ENCODE measurements at regions of chr5 and their contacts with region 1.

Region 1: GRCh38 chr5:149834246-149834855 is 104.2 kb downstream of the PPARGC1B start:
- DNase-seq: peak; percentile 43 to 57 (median 49)
- H3K4me3 ChIP-seq: no peak overlapping the region
- H3K4me3 Mint-ChIP-seq: peak overlapping the region in 1 of 8 donors; percentile 28
- H3K27ac ChIP-seq: no peak overlapping the region
- H3K27ac Mint-ChIP-seq: no peak overlapping the region
- H3K4me1 ChIP-seq: no peaks in the 10 kb centered on the region
- H3K4me1 Mint-ChIP-seq: no peaks in the 10 kb centered on the region
- H3K27me3 ChIP-seq: no peaks in the 10 kb centered on the region
- H3K27me3 Mint-ChIP-seq: no peaks in the 10 kb centered on the region

Region 2: DNA sequence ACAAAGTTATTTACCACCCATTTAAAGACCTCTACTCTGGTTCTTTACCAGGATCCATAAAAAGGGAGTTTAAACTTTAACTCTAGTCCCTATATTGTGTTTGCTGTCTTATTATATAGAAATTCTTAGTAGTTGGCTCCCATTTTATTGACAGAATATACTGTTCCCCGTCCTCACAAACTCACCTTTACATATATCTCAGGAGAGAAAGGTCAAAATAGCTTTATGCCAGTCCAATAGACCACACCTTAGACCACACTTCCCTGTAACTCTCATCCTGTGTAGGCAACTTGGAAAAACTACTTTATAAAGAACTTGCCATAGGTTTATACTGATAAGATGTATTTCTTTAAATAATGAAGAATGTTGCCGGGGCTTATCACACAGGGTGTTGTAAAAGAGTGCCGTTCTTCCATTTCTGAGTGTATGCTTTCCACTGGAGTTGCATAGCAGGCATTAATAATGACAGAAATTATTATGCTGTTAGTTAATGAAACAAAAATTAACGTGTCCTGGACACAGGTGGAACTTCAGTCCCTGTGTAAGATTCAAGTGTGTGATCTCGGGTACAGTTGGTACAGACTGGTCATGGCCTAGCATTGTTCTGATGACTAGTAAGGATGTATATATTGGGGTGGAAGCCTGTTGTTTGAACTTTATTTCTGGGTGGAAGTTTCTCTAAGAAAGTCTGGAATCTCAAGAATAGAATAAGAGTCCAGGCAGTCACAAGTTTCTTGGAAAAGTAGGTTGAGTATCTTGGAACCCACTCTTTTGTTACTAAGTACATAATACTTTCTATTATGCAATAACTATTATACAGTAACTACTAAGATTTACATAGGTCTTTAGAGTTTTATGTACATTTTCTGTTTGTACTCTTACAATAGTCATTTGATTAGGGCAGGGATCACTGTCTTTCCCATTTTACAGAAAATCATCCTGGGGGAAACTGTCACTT is 1699.0 kb before region 1 on chr5:
- CTCF ChIA-PET with region 1: no interaction called
- POLR2A ChIA-PET with region 1: no interaction called
- intact Hi-C with region 1: no loop called
- DNase-seq: no peak
- H3K4me3 ChIP-seq: no peak overlapping the region
- H3K4me3 Mint-ChIP-seq: no peak overlapping the region
- H3K27ac ChIP-seq: no peak overlapping the region
- H3K27ac Mint-ChIP-seq: no peak overlapping the region
- H3K4me1 ChIP-seq: no peaks in the 10 kb centered on the region
- H3K4me1 Mint-ChIP-seq: no peaks in the 10 kb centered on the region
- H3K27me3 ChIP-seq: no peaks in the 10 kb centered on the region
- H3K27me3 Mint-ChIP-seq: peaks cover 0 to 4% of the 10 kb centered on the region in 2 donors

Region 3: DNA sequence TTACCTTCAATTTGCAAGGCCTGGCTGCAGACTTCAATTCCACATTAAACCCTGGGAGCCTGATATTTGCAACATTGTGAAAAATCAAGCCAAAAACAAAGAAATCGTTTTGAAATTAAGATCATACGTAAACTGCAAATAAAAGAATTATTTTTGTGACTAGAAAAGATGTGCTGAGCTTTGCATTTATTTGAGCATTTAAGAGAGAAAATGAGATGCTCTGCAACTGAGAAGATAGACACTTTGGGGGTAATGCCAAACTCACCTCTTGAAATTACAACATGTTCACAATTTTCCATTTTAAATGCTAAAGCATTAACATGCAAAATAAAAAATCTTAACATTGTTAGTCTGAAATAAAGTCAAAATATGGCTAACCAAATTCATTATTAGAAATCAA is 329.7 kb before region 1 on chr5:
- CTCF ChIA-PET with region 1: no interaction called
- POLR2A ChIA-PET with region 1: no interaction called
- intact Hi-C with region 1: no loop called
- DNase-seq: no peak
- H3K4me3 ChIP-seq: no peak overlapping the region
- H3K4me3 Mint-ChIP-seq: no peak overlapping the region
- H3K27ac ChIP-seq: peak overlapping the region; percentile 15
- H3K27ac Mint-ChIP-seq: no peak overlapping the region
- H3K4me1 ChIP-seq: no peaks in the 10 kb centered on the region
- H3K4me1 Mint-ChIP-seq: peaks cover 0 to 4% (median under 1%) of the 10 kb centered on the region in 4 donors
- H3K27me3 ChIP-seq: no peaks in the 10 kb centered on the region
- H3K27me3 Mint-ChIP-seq: no peaks in the 10 kb centered on the region

Region 4: GRCh38 chr5:149636851-149637246 is 197.5 kb before region 1 on chr5:
- CTCF ChIA-PET with region 1: interaction called, 309 read pairs
- POLR2A ChIA-PET with region 1: no interaction called
- intact Hi-C with region 1: no loop called
- DNase-seq: peak; percentile 39 to 65 (median 52)
- H3K4me3 ChIP-seq: no peak overlapping the region
- H3K4me3 Mint-ChIP-seq: no peak overlapping the region
- H3K27ac ChIP-seq: no peak overlapping the region
- H3K27ac Mint-ChIP-seq: no peak overlapping the region
- H3K4me1 ChIP-seq: no peaks in the 10 kb centered on the region
- H3K4me1 Mint-ChIP-seq: peaks cover 0 to 4% (median 1%) of the 10 kb centered on the region in 4 donors
- H3K27me3 ChIP-seq: peaks cover 5% of the 10 kb centered on the region
- H3K27me3 Mint-ChIP-seq: peaks cover 0 to under 1% of the 10 kb centered on the region in 2 donors

Region 5: GRCh38 chr5:149820536-149821510 is 13.5 kb before region 1 on chr5:
- CTCF ChIA-PET with region 1: interaction called, 51 read pairs
- POLR2A ChIA-PET with region 1: no interaction called
- intact Hi-C with region 1: no loop called
- DNase-seq: no peak
- H3K4me3 ChIP-seq: no peak overlapping the region
- H3K4me3 Mint-ChIP-seq: no peak overlapping the region
- H3K27ac ChIP-seq: no peak overlapping the region
- H3K27ac Mint-ChIP-seq: no peak overlapping the region
- H3K4me1 ChIP-seq: no peaks in the 10 kb centered on the region
- H3K4me1 Mint-ChIP-seq: no peaks in the 10 kb centered on the region
- H3K27me3 ChIP-seq: no peaks in the 10 kb centered on the region
- H3K27me3 Mint-ChIP-seq: no peaks in the 10 kb centered on the region

Region 6: DNA sequence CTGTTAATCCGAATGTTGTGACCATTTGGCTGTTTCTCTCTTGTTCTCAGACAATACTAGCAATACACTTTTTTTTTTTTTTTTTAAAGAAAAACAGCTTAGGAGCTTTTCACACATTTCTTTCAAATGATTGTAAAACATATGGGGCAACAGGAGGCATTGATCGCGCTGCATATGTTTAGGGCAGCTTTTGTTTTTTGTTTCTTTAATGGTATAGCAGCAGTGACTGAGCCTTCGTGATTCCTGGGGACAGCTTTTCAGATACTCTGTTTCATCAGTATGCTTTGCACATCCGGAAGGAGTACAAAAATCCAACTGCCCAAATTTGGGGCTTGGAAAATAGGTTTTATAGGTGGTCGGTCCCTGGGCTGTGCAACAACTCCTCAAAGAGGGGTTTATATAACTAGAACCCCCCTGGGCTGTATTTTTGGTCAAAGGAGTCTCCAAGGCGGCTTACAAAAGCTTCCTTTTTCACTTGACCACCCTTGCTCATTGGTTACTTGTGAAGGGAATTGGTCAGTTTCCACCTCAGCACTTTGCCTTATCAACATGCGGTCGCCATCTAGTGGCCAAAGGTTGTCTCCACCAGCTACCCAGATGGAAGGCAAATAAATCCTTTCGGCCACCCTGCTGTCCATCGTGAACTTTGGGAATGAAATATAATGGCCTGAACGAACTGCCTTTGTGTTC is 18.4 kb after region 1 on chr5:
- CTCF ChIA-PET with region 1: interaction called, 38 read pairs
- POLR2A ChIA-PET with region 1: no interaction called
- intact Hi-C with region 1: loop called (anchors 2 kb)
- DNase-seq: peak in 3 of 5 donors; percentile 10 to 19 (median 12)
- H3K4me3 ChIP-seq: no peak overlapping the region
- H3K4me3 Mint-ChIP-seq: no peak overlapping the region
- H3K27ac ChIP-seq: no peak overlapping the region
- H3K27ac Mint-ChIP-seq: no peak overlapping the region
- H3K4me1 ChIP-seq: no peaks in the 10 kb centered on the region
- H3K4me1 Mint-ChIP-seq: no peaks in the 10 kb centered on the region
- H3K27me3 ChIP-seq: no peaks in the 10 kb centered on the region
- H3K27me3 Mint-ChIP-seq: no peaks in the 10 kb centered on the region

Region 7: DNA sequence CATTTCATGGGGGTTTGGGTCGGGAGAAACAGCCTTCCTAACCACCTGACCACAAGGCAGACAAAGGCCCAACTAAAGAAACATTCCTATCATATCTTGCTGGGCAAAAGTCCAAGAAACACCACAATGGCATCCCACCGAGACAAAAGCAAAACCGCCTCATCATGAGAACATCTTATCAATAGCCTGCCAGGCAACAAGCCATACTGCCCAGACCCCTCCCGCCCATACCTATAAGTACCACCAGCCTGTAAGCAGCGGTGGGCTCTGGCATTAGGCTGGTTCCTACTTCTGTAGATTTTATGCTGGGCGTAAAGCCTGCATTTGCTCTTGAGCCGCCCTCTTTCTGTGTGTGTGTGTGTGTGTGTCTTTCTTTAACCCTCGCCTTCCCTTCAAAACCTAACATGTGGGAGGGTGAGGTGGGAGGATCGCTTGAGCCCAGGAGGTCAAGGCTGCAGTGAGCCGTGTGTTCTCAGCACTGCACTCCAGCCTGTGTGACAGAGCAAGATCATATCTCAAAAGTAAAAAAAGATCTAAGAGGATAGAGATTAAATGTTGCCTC is 53.4 kb after region 1 on chr5:
- CTCF ChIA-PET with region 1: no interaction called
- POLR2A ChIA-PET with region 1: no interaction called
- intact Hi-C with region 1: no loop called
- DNase-seq: no peak
- H3K4me3 ChIP-seq: no peak overlapping the region
- H3K4me3 Mint-ChIP-seq: no peak overlapping the region
- H3K27ac ChIP-seq: no peak overlapping the region
- H3K27ac Mint-ChIP-seq: no peak overlapping the region
- H3K4me1 ChIP-seq: no peaks in the 10 kb centered on the region
- H3K4me1 Mint-ChIP-seq: no peaks in the 10 kb centered on the region
- H3K27me3 ChIP-seq: no peaks in the 10 kb centered on the region
- H3K27me3 Mint-ChIP-seq: peaks cover 2 to 5% of the 10 kb centered on the region in 2 donors

Region 8: GRCh38 chr5:150036513-150036912 is 202.2 kb after region 1 on chr5:
- CTCF ChIA-PET with region 1: no interaction called
- POLR2A ChIA-PET with region 1: no interaction called
- intact Hi-C with region 1: no loop called
- DNase-seq: no peak
- H3K4me3 ChIP-seq: no peak overlapping the region
- H3K4me3 Mint-ChIP-seq: no peak overlapping the region
- H3K27ac ChIP-seq: no peak overlapping the region
- H3K27ac Mint-ChIP-seq: no peak overlapping the region
- H3K4me1 ChIP-seq: no peaks in the 10 kb centered on the region
- H3K4me1 Mint-ChIP-seq: peaks cover 0 to 2% (median 0%) of the 10 kb centered on the region in 4 donors
- H3K27me3 ChIP-seq: no peaks in the 10 kb centered on the region
- H3K27me3 Mint-ChIP-seq: no peaks in the 10 kb centered on the region

Measured in CD4-positive, alpha-beta memory T cell (primary cell).